Activated naive CD4-positive, alpha-beta T cell treated with anti-CD3 and anti-CD28 coated beads for 36 hours (primary cell): ENCODE measurements at regions of chr7 and their contacts with region 1.

Region 1: DNA sequence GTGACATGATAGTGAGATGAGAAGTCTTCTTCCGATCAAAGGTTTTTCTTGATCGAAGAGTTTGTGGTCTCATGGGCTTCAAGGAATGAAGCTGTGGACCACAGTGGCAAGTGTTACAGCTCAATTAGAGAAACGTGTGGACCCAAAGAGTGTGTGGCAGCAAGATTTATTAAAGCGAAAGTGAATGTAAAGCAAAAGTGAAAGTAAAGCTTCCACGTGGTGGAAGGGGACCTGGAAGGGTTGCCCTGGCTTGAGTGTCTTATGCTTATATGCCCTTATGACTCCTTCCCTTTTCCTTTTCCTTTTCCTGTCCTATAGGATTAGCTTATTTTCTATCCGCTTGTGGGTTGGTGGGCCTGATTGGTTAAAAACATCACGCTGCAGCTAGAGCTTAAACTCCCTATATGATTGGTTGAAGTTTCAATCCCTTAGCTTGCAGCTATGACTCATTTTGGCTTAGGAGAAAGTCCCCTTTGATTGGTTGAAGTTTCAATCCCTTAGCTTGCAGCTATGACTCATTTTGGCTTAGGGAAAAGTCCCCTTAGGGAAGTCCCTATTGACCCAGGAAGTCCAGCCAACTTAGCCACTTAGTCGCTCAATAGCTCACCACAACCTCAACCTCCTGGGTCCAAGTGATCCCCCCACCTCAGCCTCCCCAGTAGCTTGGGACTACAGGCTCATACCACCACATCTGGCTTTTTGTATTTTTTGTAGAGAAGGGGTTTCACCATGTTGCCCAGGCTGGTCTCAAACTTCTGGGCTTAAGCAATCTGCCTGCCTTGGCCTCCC is 34.7 kb downstream of the MRPS24 start:
- DNase-seq: peak; percentile 55
- H3K4me3 Mint-ChIP-seq: peak overlapping the region; percentile 64
- H3K27ac Mint-ChIP-seq: peak overlapping the region; percentile 76
- H3K4me1 Mint-ChIP-seq: peaks cover 34% of the 10 kb centered on the region
- H3K27me3 Mint-ChIP-seq: no peaks in the 10 kb centered on the region

Region 2: GRCh38 chr7:42931834-42932651 is 902.6 kb before region 1 on chr7 and contains the starts of genes MRPL32 and PSMA2:
- CTCF ChIA-PET with region 1: no interaction called
- intact Hi-C with region 1: loop called (anchors 5 kb)
- DNase-seq: peak; percentile 95
- H3K4me3 Mint-ChIP-seq: peak within 1 kb of the TSS; percentile 100
- H3K27ac Mint-ChIP-seq: peak within 1 kb of the TSS; percentile 100
- H3K4me1 Mint-ChIP-seq: peaks cover 60% of the 10 kb centered on the region
- H3K27me3 Mint-ChIP-seq: no peaks in the 10 kb centered on the region
- total RNA-seq, gene MRPL32: 67.4 to 71.8 TPM
- total RNA-seq, gene PSMA2: 199 to 221 TPM

Region 3: DNA sequence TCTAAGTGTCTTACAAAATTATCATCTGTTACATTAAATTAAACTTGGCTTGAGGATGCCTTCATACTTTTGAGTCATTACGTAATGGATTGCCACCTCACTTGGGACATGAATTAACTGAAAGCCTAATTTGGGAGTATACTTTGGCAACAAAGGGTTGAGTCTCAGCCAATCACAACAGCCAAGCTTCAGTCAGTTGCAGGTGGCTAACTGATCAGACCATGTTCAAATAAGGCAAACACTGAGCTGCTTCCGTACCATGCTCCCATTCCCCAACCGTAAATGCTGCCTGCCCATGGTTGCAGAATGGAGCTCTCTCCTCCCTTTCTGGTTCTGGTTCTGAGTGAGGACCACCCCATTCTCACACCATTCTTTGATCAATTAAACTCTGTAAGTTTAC is 344.6 kb before region 1 on chr7:
- CTCF ChIA-PET with region 1: no interaction called
- intact Hi-C with region 1: no loop called
- DNase-seq: no peak
- H3K4me3 Mint-ChIP-seq: no peak overlapping the region
- H3K27ac Mint-ChIP-seq: no peak overlapping the region
- H3K4me1 Mint-ChIP-seq: no peaks in the 10 kb centered on the region
- H3K27me3 Mint-ChIP-seq: peaks cover 2% of the 10 kb centered on the region

Region 4: GRCh38 chr7:43647673-43648472 is 186.8 kb before region 1 on chr7:
- CTCF ChIA-PET with region 1: interaction called, 4 read pairs
- intact Hi-C with region 1: loop called (anchors 1 kb)
- DNase-seq: peak; percentile 87
- H3K4me3 Mint-ChIP-seq: peak overlapping the region; percentile 62
- H3K27ac Mint-ChIP-seq: peak overlapping the region; percentile 98
- H3K4me1 Mint-ChIP-seq: peaks cover 94% of the 10 kb centered on the region
- H3K27me3 Mint-ChIP-seq: no peaks in the 10 kb centered on the region

Region 5: GRCh38 chr7:43729214-43729923 is 105.3 kb before region 1 on chr7 and contains the start of gene COA1:
- CTCF ChIA-PET with region 1: interaction called, 22 read pairs
- intact Hi-C with region 1: loop called (anchors 1 kb)
- DNase-seq: peak; percentile 87
- H3K4me3 Mint-ChIP-seq: peak within 1 kb of the TSS; percentile 90
- H3K27ac Mint-ChIP-seq: peak within 1 kb of the TSS; percentile 89
- H3K4me1 Mint-ChIP-seq: peaks cover 35% of the 10 kb centered on the region
- H3K27me3 Mint-ChIP-seq: peaks cover 7% of the 10 kb centered on the region
- total RNA-seq, gene COA1: 85.9 to 87.2 TPM

Region 6: DNA sequence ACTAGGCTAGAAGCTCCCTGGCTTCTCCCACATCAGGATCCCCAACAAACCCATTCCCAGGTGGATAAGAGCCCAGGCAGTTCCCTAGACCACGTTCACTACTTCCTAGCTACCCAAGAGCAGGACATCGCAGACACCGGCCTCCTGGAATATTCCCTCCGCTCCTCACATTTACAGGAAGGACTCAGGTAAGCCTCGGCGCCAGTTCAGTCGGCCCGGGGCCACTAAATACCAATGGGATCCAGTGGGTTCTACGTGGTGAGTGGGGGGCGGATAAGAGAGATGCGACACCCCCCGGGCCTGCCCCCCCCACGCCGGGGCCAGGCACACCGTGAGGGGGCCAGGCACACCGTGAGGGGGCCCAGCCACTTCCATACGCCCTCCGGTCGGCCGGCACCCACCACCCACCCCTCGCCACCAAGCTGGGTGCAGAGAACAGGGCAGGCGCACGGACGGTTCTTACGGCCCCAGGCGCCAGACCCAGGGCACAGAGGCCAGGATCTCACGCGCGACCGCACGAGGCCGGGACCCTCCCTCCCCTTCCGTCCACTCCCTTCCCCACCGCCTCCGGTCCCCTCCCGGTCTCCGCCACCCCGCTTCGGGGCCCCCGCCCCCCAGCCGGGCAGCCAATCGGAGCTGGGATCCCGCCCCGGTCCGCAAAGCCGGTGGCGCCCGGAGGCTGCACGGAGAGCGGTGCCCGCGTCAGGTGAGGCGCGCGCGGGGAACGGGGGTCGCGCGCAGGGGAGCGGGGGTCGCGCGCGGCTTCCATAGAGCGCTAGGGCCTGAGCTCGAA is 76.4 kb before region 1 on chr7 and contains the start of gene BLVRA:
- CTCF ChIA-PET with region 1: interaction called, 5 read pairs
- intact Hi-C with region 1: loop called (anchors 5 kb)
- DNase-seq: peak; percentile 66
- H3K4me3 Mint-ChIP-seq: peak within 1 kb of the TSS; percentile 71
- H3K27ac Mint-ChIP-seq: no peak within 1 kb of the TSS
- H3K4me1 Mint-ChIP-seq: peaks cover 43% of the 10 kb centered on the region
- H3K27me3 Mint-ChIP-seq: no peaks in the 10 kb centered on the region
- total RNA-seq, gene BLVRA: 26.6 to 28.9 TPM

Region 7: GRCh38 chr7:43847496-43847895 is 12.8 kb after region 1 on chr7:
- CTCF ChIA-PET with region 1: interaction called, 19 read pairs
- intact Hi-C with region 1: no loop called
- DNase-seq: no peak
- H3K4me3 Mint-ChIP-seq: no peak overlapping the region
- H3K27ac Mint-ChIP-seq: no peak overlapping the region
- H3K4me1 Mint-ChIP-seq: no peaks in the 10 kb centered on the region
- H3K27me3 Mint-ChIP-seq: no peaks in the 10 kb centered on the region

Region 8: DNA sequence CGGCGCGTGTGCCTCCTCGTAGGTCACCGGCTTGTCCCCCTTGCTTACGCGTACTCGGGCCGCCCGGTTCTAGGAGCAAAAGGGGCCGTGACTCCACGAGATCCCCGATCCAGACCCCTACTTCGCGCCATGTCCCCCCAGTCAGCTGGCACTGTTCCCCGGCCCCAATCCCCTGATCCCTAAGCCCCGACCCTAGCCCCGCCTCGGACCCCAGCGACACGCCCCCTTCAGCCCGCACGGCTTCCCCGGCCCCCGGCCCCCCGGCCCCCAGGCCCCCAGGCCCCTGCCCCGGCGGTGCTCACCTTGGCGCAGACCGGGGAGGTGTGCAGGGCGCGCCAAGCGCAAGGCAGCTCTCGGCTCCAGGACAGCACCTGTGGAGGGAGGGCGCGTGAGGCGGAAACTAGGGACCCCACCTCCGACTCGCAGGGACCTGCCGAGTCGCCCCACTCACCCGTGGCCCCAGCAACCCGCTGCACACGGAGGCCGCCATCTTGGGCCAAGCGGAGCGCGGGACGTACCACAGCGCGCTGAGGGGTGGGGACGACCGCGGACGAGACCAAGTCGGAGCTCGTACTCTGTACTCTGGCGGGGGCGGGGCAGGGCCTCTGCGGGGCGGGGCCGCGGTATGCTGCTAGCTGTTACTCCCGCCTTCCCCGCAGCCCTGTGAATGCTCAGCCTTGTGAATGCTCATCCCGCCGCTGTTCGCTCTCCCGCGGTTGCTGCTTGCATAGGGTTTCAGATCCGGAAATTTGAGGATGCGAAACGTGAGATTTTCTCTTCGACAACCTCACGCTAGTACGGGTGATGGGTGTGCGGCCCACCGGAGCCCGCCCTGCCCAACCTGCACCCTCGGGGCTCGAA is 34.6 kb after region 1 on chr7 and contains the start of gene MRPS24:
- CTCF ChIA-PET with region 1: no interaction called
- intact Hi-C with region 1: no loop called
- DNase-seq: peak; percentile 98
- H3K4me3 Mint-ChIP-seq: peak within 1 kb of the TSS; percentile 81
- H3K27ac Mint-ChIP-seq: peak within 1 kb of the TSS; percentile 89
- H3K4me1 Mint-ChIP-seq: peaks cover 20% of the 10 kb centered on the region
- H3K27me3 Mint-ChIP-seq: no peaks in the 10 kb centered on the region
- total RNA-seq, gene MRPS24: 153 TPM